ENCODE measurements at regions of chr2 and their contacts with region 1.

Region 1: GRCh38 chr2:201182650-201183364 is at the start of gene CASP10:
- DNase-seq: peak; percentile 95
- H3K4me3 ChIP-seq: peak within 1 kb of the TSS; percentile 59 to 96 (median 85)
- H3K27ac ChIP-seq: peak within 1 kb of the TSS; percentile 77
- H3K4me1 ChIP-seq: peaks cover 18% of the 10 kb centered on the region
- H3K27me3 ChIP-seq: no peaks in the 10 kb centered on the region
- CTCF ChIP-seq: peak; percentile 51 to 65
- POLR2A ChIP-seq: peak; percentile 91
- total RNA-seq, gene CASP10: 31.1 and 37.6 TPM in 2 replicates

Region 2: GRCh38 chr2:200274116-200275075 is 908.4 kb before region 1 on chr2:
- CTCF ChIA-PET with region 1: no interaction called
- POLR2A ChIA-PET with region 1: no interaction called
- dilution Hi-C with region 1: no loop called
- intact Hi-C with region 1: no loop called
- DNase-seq: no peak
- H3K4me3 ChIP-seq: no peak overlapping the region
- H3K27ac ChIP-seq: no peak overlapping the region
- H3K4me1 ChIP-seq: no peaks in the 10 kb centered on the region
- H3K27me3 ChIP-seq: peaks cover 5 to 11% of the 10 kb centered on the region in 2 experiments
- CTCF ChIP-seq: no peak
- POLR2A ChIP-seq: no peak

Region 3: GRCh38 chr2:200963124-200963917 is 219.5 kb before region 1 on chr2 and contains the start of gene ORC2:
- CTCF ChIA-PET with region 1: interaction called, 15 read pairs
- POLR2A ChIA-PET with region 1: no interaction called
- dilution Hi-C with region 1: no loop called
- intact Hi-C with region 1: no loop called
- DNase-seq: peak; percentile 95
- H3K4me3 ChIP-seq: peak within 1 kb of the TSS; percentile 30 to 79 (median 61)
- H3K27ac ChIP-seq: peak within 1 kb of the TSS; percentile 71
- H3K4me1 ChIP-seq: peaks cover 24% of the 10 kb centered on the region
- H3K27me3 ChIP-seq: no peaks in the 10 kb centered on the region
- CTCF ChIP-seq: peak; percentile 66 to 75
- POLR2A ChIP-seq: peak; percentile 69
- total RNA-seq, gene ORC2: 34.0 and 45.4 TPM in 2 replicates

Region 4: DNA sequence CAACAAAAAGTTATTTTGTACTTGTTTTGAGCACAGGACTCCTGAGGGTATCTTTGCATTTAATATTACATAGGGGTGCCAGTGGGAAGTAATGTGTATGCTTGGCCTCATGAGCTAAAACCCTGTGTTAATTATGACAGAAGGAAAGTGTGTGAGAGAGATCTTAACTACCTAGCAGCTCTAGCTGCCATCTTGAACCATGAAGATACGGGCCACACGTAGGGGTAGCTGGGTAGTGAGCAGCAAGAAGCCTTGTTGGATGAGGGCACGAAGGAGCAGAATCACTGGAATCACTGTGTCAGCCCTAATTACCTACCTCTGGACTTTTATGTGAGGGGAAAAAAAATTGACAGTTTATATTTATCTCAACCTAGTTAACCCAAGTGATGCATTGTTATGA is 15.3 kb before region 1 on chr2:
- CTCF ChIA-PET with region 1: no interaction called
- POLR2A ChIA-PET with region 1: no interaction called
- dilution Hi-C with region 1: no loop called
- intact Hi-C with region 1: no loop called
- DNase-seq: no peak
- H3K4me3 ChIP-seq: no peak overlapping the region
- H3K27ac ChIP-seq: no peak overlapping the region
- H3K4me1 ChIP-seq: peaks cover 14% of the 10 kb centered on the region
- H3K27me3 ChIP-seq: no peaks in the 10 kb centered on the region
- CTCF ChIP-seq: no peak
- POLR2A ChIP-seq: no peak

Region 5: GRCh38 chr2:201194097-201194496 is 11.3 kb after region 1 on chr2:
- CTCF ChIA-PET with region 1: interaction called, 27 read pairs
- POLR2A ChIA-PET with region 1: interaction called, 3 read pairs
- dilution Hi-C with region 1: no loop called
- intact Hi-C with region 1: loop called (anchors 1 kb)
- DNase-seq: no peak
- H3K4me3 ChIP-seq: no peak overlapping the region
- H3K27ac ChIP-seq: no peak overlapping the region
- H3K4me1 ChIP-seq: peaks cover 35% of the 10 kb centered on the region
- H3K27me3 ChIP-seq: no peaks in the 10 kb centered on the region
- CTCF ChIP-seq: no peak
- POLR2A ChIP-seq: no peak

Region 6: GRCh38 chr2:201307876-201308275 is 125.1 kb after region 1 on chr2:
- CTCF ChIA-PET with region 1: no interaction called
- POLR2A ChIA-PET with region 1: no interaction called
- dilution Hi-C with region 1: no loop called
- intact Hi-C with region 1: no loop called
- DNase-seq: no peak
- H3K4me3 ChIP-seq: no peak overlapping the region
- H3K27ac ChIP-seq: no peak overlapping the region
- H3K4me1 ChIP-seq: no peaks in the 10 kb centered on the region
- H3K27me3 ChIP-seq: no peaks in the 10 kb centered on the region
- CTCF ChIP-seq: no peak
- POLR2A ChIP-seq: no peak

Region 7: DNA sequence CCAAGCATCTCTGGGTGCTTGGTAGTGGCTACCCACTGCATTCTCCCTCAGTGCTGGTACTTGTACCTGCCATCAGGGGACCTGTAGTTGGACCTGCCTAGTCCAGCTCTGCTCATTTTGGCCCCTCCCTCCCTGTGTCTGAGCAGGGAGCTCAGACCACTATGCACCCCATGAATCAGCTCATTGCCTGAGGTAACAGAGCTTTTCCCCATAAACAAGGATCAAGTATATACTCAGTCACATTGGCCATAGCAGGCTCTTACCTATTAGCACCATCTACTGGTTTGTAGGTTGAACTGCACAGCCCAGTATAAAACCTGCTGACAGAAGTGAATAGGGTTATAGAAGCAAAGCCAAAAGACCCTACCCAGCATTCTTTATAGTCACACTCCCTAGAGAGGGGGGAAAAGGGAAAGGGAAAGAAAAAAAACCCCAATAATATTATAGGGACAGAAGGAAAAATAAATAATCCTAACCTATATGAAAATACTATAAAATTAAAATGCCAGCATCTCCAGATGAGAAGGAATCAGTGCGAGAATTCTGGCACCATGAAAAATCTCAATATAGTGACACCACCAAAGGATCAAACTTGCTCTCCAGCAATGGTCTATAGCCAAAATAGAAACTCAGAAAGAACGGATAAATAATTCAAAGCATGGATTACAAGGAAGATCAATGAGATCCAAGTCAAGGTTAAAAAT is 181.2 kb after region 1 on chr2:
- CTCF ChIA-PET with region 1: interaction called, 7 read pairs
- POLR2A ChIA-PET with region 1: no interaction called
- dilution Hi-C with region 1: no loop called
- intact Hi-C with region 1: loop called (anchors 2 kb)
- DNase-seq: peak; percentile 54
- H3K4me3 ChIP-seq: no peak overlapping the region
- H3K27ac ChIP-seq: no peak overlapping the region
- H3K4me1 ChIP-seq: no peaks in the 10 kb centered on the region
- H3K27me3 ChIP-seq: no peaks in the 10 kb centered on the region
- CTCF ChIP-seq: peak; percentile 66 to 78
- POLR2A ChIP-seq: no peak